IMR-90 (cell line): ENCODE measurements at regions of chr16 and their contacts with region 1.

Region 1: DNA sequence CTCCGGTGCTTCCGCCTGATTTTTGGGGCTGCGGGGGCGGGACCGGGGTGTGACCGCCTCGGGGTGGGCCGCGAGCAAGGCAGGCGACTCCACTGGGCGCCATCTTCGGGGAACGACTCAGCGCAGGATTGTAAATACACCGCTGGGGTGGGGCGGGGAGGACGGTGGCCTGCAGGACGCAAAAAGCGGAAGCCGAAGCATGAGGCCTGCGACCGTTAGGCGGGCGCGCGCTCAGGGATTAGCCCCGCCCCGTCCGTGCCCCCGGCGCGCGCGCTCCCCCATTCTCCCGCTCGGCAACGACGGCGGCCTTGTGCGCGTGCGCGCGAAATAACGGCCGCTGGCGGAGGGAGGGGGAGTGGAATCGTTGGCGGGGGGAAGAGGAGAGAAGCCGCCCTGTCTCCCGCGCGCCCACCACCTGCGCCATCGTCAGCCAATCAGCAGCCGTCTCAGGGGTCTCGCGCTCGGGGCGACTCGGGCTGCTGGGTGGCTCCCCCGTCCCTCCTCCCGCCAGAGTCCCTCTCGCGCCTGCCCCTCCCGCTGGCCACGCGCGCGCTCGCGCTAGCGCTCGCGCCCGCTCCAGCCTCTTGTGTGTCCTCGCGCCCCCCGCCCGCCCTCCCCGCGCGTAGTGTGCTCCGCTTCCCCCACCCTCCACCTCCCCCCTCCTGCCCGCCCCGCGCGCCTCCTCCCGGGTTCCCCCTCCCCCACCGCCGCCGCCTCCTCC is 791 bp upstream of the MAZ start:
- DNase-seq: peak; percentile 97
- ATAC-seq: peak; percentile 69
- H3K4me3 ChIP-seq: peak overlapping the region; percentile 79
- H3K27ac ChIP-seq: peak overlapping the region; percentile 96
- H3K4me1 ChIP-seq: peaks cover 16% of the 10 kb centered on the region
- H3K27me3 ChIP-seq: no peaks in the 10 kb centered on the region
- CTCF ChIP-seq: no peak
- POLR2A ChIP-seq: peak; percentile 77; the same call in 1 of the 2 replicates
- RAD21 ChIP-seq: no peak

Region 2: GRCh38 chr16:29653471-29653870 is 152.1 kb before region 1 on chr16:
- CTCF ChIA-PET with region 1: no interaction called
- POLR2A ChIA-PET with region 1: no interaction called
- dilution Hi-C with region 1: no loop called
- in situ Hi-C with region 1: no loop called
- intact Hi-C with region 1: no loop called
- DNase-seq: no peak
- ATAC-seq: no peak
- H3K4me3 ChIP-seq: no peak overlapping the region
- H3K27ac ChIP-seq: no peak overlapping the region
- H3K4me1 ChIP-seq: no peaks in the 10 kb centered on the region
- H3K27me3 ChIP-seq: peaks cover 9% of the 10 kb centered on the region
- CTCF ChIP-seq: no peak
- POLR2A ChIP-seq: no peak
- RAD21 ChIP-seq: no peak

Region 3: GRCh38 chr16:29848420-29849297 is 43.1 kb after region 1 on chr16:
- CTCF ChIA-PET with region 1: interaction called, 10 read pairs
- POLR2A ChIA-PET with region 1: no interaction called
- dilution Hi-C with region 1: no loop called
- in situ Hi-C with region 1: no loop called
- intact Hi-C with region 1: loop called (anchors 1 kb)
- DNase-seq: peak; percentile 63
- ATAC-seq: peak; percentile 84
- H3K4me3 ChIP-seq: no peak overlapping the region
- H3K27ac ChIP-seq: no peak overlapping the region
- H3K4me1 ChIP-seq: no peaks in the 10 kb centered on the region; the same call in 1 of the 2 replicates
- H3K27me3 ChIP-seq: no peaks in the 10 kb centered on the region
- CTCF ChIP-seq: peak; percentile 74
- POLR2A ChIP-seq: no peak
- RAD21 ChIP-seq: peak; percentile 76

Region 4: GRCh38 chr16:30829130-30830071 is 1023.9 kb after region 1 on chr16:
- CTCF ChIA-PET with region 1: no interaction called
- POLR2A ChIA-PET with region 1: no interaction called
- dilution Hi-C with region 1: no loop called
- in situ Hi-C with region 1: no loop called
- intact Hi-C with region 1: no loop called
- DNase-seq: no peak
- ATAC-seq: no peak
- H3K4me3 ChIP-seq: no peak overlapping the region
- H3K27ac ChIP-seq: no peak overlapping the region
- H3K4me1 ChIP-seq: no peaks in the 10 kb centered on the region
- H3K27me3 ChIP-seq: peaks cover 2% of the 10 kb centered on the region; the same call in 1 of the 2 replicates
- CTCF ChIP-seq: no peak
- POLR2A ChIP-seq: no peak
- RAD21 ChIP-seq: no peak